HCT116 (cell line): ENCODE measurements at regions of chr15 and their contacts with region 1.

Region 1: DNA sequence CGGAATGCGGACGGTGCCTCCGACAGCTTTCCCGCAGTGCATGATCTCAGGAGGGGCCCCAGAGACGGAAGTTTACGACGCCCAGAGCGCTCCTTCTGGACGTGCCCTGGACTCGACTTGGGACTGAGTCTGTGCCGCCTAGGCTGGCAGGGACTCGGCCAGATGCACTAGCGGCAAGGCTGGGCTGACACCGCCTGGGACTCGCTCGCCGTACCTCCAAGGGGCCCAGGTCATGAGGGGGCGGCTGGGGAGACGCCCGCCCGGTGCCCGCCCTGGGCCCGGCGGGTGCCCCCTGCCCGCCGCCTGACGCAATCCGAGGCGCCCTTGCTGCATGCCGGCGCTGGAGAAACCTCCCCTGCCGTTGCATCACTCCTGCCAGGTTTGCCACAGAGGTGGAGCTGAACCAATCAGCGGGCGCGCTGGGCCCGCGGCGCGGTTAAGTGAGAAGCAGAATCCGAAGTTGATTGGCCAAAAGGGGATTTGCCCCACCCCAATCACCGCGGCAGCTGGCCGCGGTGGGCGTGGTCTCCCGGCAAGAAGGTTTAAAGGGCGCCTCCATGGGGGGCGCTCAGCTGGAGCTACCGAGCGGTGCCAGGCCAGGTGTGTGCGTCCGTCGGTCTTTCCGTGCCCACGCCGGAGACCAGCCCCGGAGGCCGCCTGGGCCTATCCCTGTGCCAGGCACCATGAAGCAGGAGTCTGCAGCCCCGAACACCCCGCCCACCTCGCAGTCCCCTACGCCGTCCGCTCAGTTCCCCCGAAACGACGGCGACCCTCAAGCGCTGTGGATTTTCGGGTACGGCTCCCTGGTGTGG is at the start of gene CHAC1:
- DNase-seq: peak; percentile 94
- ATAC-seq: peak; percentile 94
- H3K4me3 ChIP-seq: peak within 1 kb of the TSS; percentile 68 to 73
- H3K27ac ChIP-seq: peak within 1 kb of the TSS; percentile 74
- H3K4me1 ChIP-seq: peaks cover 9 to 23% of the 10 kb centered on the region in 2 experiments; a peak in 2 of 4 replicates
- H3K27me3 ChIP-seq: no peaks in the 10 kb centered on the region
- CTCF ChIP-seq: no peak
- POLR2A ChIP-seq: peak; percentile 86
- RAD21 ChIP-seq: no peak
- total RNA-seq, gene CHAC1: 58.9 TPM

Region 2: GRCh38 chr15:40941528-40942336 is 11.4 kb before region 1 on chr15:
- CTCF ChIA-PET with region 1: interaction called, 24 read pairs
- POLR2A ChIA-PET with region 1: interaction called, 39 read pairs
- RAD21 ChIA-PET with region 1: no interaction called
- intact Hi-C with region 1: no loop called
- DNase-seq: no peak
- ATAC-seq: peak; percentile 87
- H3K4me3 ChIP-seq: peak overlapping the region; percentile 53 to 60
- H3K27ac ChIP-seq: peak overlapping the region; percentile 72
- H3K4me1 ChIP-seq: peaks cover 17 to 18% of the 10 kb centered on the region in 2 experiments; a peak in 3 of 4 replicates
- H3K27me3 ChIP-seq: no peaks in the 10 kb centered on the region
- CTCF ChIP-seq: peak; percentile 20 to 33 (median 32); a peak in 3 of 6 replicates
- POLR2A ChIP-seq: peak; percentile 55
- RAD21 ChIP-seq: peak; percentile 53

Region 3: GRCh38 chr15:40968290-40969085 is 15.4 kb after region 1 on chr15:
- CTCF ChIA-PET with region 1: interaction called, 4 read pairs
- POLR2A ChIA-PET with region 1: interaction called, 44 read pairs
- RAD21 ChIA-PET with region 1: no interaction called
- intact Hi-C with region 1: no loop called
- DNase-seq: peak; percentile 13
- ATAC-seq: peak; percentile 55; the same call in 1 of the 2 replicates
- H3K4me3 ChIP-seq: no peak overlapping the region
- H3K27ac ChIP-seq: no peak overlapping the region
- H3K4me1 ChIP-seq: peaks cover 7 to 17% of the 10 kb centered on the region in 2 experiments
- H3K27me3 ChIP-seq: no peaks in the 10 kb centered on the region
- CTCF ChIP-seq: no peak
- POLR2A ChIP-seq: no peak
- RAD21 ChIP-seq: no peak